Naive thymus-derived CD4-positive, alpha-beta T cell (primary cell): ENCODE measurements at regions of chr2 and their contacts with region 1.

Region 1: GRCh38 chr2:209074711-209075110 is 349.1 kb upstream of the MAP2 start:
- DNase-seq: no peak
- ATAC-seq: no peak
- H3K4me3 ChIP-seq: no peak overlapping the region
- H3K4me3 Mint-ChIP-seq: no peak overlapping the region
- H3K27ac ChIP-seq: no peak overlapping the region
- H3K27ac Mint-ChIP-seq: no peak overlapping the region
- H3K4me1 ChIP-seq: no peaks in the 10 kb centered on the region
- H3K4me1 Mint-ChIP-seq: no peaks in the 10 kb centered on the region
- H3K27me3 ChIP-seq: no peaks in the 10 kb centered on the region
- H3K27me3 Mint-ChIP-seq: no peaks in the 10 kb centered on the region

Region 2: GRCh38 chr2:209062210-209062609 is 12.5 kb before region 1 on chr2:
- CTCF ChIA-PET with region 1: no interaction called
- POLR2A ChIA-PET with region 1: no interaction called
- intact Hi-C with region 1: no loop called
- DNase-seq: no peak
- ATAC-seq: no peak
- H3K4me3 ChIP-seq: no peak overlapping the region
- H3K4me3 Mint-ChIP-seq: no peak overlapping the region
- H3K27ac ChIP-seq: no peak overlapping the region
- H3K27ac Mint-ChIP-seq: no peak overlapping the region
- H3K4me1 ChIP-seq: no peaks in the 10 kb centered on the region
- H3K4me1 Mint-ChIP-seq: no peaks in the 10 kb centered on the region
- H3K27me3 ChIP-seq: no peaks in the 10 kb centered on the region
- H3K27me3 Mint-ChIP-seq: no peaks in the 10 kb centered on the region

Region 3: GRCh38 chr2:209086761-209087160 is 12.1 kb after region 1 on chr2:
- CTCF ChIA-PET with region 1: no interaction called
- POLR2A ChIA-PET with region 1: no interaction called
- intact Hi-C with region 1: loop called in 1 of 2 experiments (anchors 1 kb)
- DNase-seq: no peak
- ATAC-seq: no peak
- H3K4me3 ChIP-seq: no peak overlapping the region
- H3K4me3 Mint-ChIP-seq: no peak overlapping the region
- H3K27ac ChIP-seq: no peak overlapping the region
- H3K27ac Mint-ChIP-seq: no peak overlapping the region
- H3K4me1 ChIP-seq: no peaks in the 10 kb centered on the region
- H3K4me1 Mint-ChIP-seq: no peaks in the 10 kb centered on the region
- H3K27me3 ChIP-seq: no peaks in the 10 kb centered on the region
- H3K27me3 Mint-ChIP-seq: no peaks in the 10 kb centered on the region